WTC11 (cell line): ENCODE measurements at regions of chr20 and their contacts with region 1.

Region 1: GRCh38 chr20:31822421-31823330 is 3.5 kb downstream of the MYLK2 start:
- DNase-seq: peak; percentile 92
- ATAC-seq: peak; percentile 73
- H3K4me3 Mint-ChIP-seq: peak overlapping the region; percentile 49
- H3K27ac Mint-ChIP-seq: no peak overlapping the region
- H3K4me1 Mint-ChIP-seq: peaks cover 7% of the 10 kb centered on the region; the same call in 1 of the 2 replicates
- H3K27me3 Mint-ChIP-seq: no peaks in the 10 kb centered on the region
- CTCF ChIP-seq: peak; percentile 99

Region 2: DNA sequence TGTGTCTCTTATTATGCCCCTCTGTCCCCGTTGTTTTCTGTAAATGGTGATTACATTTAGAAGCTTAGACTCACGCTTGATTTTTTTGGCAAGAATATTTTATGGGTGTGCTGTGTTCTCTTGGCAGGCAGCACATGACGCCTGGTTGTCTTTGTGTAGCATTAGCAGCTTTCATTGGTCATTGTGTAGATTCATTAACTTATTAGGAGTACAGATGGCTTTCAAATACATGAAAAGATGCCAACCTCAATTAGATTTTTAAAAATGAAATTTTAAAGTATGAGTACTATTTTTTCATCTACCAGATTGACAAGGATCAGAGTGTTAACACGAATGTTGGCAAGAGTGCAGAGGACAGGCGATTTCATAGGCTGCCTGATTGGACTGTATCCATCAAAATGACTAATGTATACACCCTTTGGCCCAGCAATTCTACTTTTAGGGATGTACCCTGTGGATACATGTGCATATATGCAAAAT is 169.7 kb before region 1 on chr20:
- CTCF ChIA-PET with region 1: no interaction called
- POLR2A ChIA-PET with region 1: no interaction called
- DNase-seq: no peak
- ATAC-seq: no peak
- H3K4me3 Mint-ChIP-seq: no peak overlapping the region
- H3K27ac Mint-ChIP-seq: no peak overlapping the region
- H3K4me1 Mint-ChIP-seq: no peaks in the 10 kb centered on the region
- H3K27me3 Mint-ChIP-seq: peaks cover 4% of the 10 kb centered on the region
- CTCF ChIP-seq: no peak

Region 3: DNA sequence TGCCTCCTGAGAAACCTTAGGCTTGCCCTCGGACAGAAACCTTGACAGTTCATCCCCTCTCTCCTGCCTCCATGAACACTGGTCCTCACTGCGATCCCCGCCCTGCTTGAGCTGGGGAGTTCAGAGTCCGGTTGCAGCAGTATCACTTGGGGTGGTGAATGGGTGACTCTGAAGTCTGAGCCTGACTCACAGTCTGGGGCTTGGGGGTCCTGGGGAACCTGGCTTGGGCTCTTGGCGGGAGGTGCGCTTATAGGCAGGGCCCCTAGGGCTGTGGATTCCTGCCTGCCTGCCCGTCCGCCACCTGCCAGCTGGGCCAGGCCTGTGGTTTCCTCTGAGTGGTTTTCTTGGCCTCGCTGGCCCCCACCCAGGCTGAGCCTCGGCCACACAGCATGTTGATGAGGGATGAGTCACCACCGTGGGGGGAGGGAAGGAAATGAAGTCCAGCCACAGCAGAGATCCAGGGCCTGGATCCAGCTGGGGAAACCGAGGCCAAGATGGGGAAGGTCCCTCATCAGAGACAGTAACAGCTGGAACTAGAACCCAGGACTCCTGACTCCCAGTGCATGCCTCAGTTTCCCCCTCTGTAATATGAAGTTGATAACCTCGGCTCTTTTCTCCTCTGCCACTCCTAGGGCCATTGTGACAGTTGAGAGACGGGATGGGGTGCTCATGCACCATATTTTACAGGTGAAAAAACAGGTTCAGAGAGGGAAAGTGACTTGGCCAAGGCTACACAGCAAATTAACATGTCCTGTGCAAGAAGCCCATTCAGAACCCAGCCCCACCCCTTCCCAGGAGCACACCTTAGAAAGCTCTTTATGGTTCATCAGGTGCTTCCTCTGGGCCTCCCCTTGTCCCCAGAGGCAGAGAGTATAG is 13.5 kb after region 1 on chr20:
- CTCF ChIA-PET with region 1: interaction called, 25 read pairs
- POLR2A ChIA-PET with region 1: no interaction called
- DNase-seq: no peak
- ATAC-seq: no peak
- H3K4me3 Mint-ChIP-seq: no peak overlapping the region
- H3K27ac Mint-ChIP-seq: no peak overlapping the region
- H3K4me1 Mint-ChIP-seq: 0 out of 2 replicates have a peak, but pooled peaks cover 13% of the 10 kb centered on the region
- H3K27me3 Mint-ChIP-seq: no peaks in the 10 kb centered on the region
- CTCF ChIP-seq: no peak

Region 4: DNA sequence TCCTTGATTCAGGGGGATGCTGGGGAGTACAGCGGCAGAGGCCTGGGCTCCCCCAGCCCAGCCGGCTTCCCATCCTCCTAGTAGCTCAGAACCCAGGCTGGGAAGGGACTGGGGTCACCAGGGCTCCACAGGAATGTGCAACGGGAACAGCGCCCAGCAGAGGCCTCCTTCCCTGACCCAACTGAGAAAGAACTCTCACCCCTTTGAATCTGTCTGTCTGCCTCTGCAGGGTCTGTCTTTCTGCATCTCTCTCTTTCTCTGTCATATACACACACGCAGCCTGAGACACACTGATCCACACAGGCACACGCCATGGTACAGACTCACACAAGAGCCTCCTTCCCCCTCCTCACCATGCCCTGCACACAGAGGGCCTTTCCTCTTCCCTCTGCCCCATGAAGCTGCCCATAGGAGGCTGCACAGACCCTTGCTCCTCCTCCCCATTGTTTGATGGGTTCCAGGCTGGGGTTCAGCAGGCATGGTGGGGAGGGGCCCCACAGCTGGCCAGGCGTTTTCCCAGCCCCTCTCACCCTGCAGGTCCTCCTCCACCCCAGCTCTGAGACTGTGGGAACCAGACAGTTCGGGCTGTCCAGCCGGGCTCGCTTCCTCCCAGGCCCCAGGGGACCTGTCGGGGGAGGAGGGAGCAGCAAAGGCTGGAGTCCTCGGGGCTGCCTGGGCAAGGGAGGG is 19.9 kb after region 1 on chr20:
- CTCF ChIA-PET with region 1: interaction called, 33 read pairs
- POLR2A ChIA-PET with region 1: no interaction called
- DNase-seq: no peak
- ATAC-seq: peak; percentile 26
- H3K4me3 Mint-ChIP-seq: no peak overlapping the region
- H3K27ac Mint-ChIP-seq: no peak overlapping the region
- H3K4me1 Mint-ChIP-seq: peaks cover 25% of the 10 kb centered on the region
- H3K27me3 Mint-ChIP-seq: no peaks in the 10 kb centered on the region
- CTCF ChIP-seq: no peak